Gastrocnemius medialis (tissue), 4 donors: ENCODE measurements at regions of chr11 and their contacts with region 1.

Region 1: GRCh38 chr11:74170694-74171629 is at the starts of genes C2CD3 and PPME1:
- DNase-seq: peak; percentile 97 to 99
- ATAC-seq: peak; percentile 96
- H3K4me3 ChIP-seq: peak within 1 kb of the TSS; percentile 66 to 93 (median 90)
- H3K27ac ChIP-seq: peak within 1 kb of the TSS; percentile 94 to 98 (median 96)
- H3K4me1 ChIP-seq: peaks cover 38 to 50% of the 10 kb centered on the region in 2 donors
- H3K27me3 ChIP-seq: no peaks in the 10 kb centered on the region
- CTCF ChIP-seq: peak in 3 of 5 experiments; percentile 14 to 40 (median 37)
- POLR2A ChIP-seq: peak; percentile 87 to 88
- total RNA-seq, gene C2CD3: 13.8 to 33.2 (median 16.4) TPM
- total RNA-seq, gene PPME1: 31.5 to 51.7 (median 43.2) TPM

Region 2: DNA sequence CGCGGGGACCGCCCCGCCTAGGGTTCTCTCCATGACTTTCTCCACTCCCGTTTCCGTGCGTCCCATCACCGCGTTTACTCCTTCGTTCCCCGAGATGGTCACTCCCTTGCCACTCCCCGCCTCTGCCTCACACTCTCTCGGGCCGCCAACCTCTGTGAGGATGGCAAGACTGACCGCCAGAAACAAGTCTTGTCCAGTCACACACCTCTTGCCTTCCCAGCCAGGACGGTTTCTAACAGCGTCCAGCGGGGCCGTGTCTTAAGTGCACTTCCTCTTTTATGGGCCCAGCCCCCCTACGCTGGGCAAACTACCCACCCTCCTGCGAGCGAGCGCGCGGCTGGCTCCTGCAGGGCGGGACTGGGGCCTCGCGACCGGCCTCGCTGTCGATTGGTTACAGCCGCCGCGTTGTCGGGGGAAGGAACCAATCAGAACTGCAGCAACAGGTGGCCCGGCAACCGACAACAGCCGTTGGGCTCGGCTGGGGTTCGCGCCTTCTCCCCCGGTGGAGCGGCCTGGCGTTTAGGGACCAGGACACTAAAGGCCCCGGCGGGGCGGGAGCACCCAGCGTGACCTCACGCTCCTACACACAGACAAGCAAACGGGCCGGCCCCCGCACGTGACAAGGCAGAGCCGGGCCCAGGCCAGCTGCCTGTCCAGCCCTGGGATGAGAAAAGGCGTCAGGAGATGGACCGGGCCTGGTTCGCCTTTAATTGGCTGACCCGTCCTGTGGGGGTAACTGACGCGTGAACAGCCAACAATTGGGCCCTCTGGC is 187.8 kb before region 1 on chr11:
- in situ Hi-C with region 1: no loop called
- intact Hi-C with region 1: loop called (anchors 5 kb)
- DNase-seq: peak; percentile 93 to 95
- ATAC-seq: peak; percentile 84 to 86
- H3K4me3 ChIP-seq: peak overlapping the region; percentile 66 to 88 (median 75)
- H3K27ac ChIP-seq: peak overlapping the region; percentile 93 to 99 (median 95)
- H3K4me1 ChIP-seq: peaks cover 12 to 36% of the 10 kb centered on the region in 2 donors
- H3K27me3 ChIP-seq: no peaks in the 10 kb centered on the region
- CTCF ChIP-seq: no peak
- POLR2A ChIP-seq: peak; percentile 74 to 92

Region 3: GRCh38 chr11:74138572-74138971 is 32.4 kb before region 1 on chr11:
- in situ Hi-C with region 1: no loop called
- intact Hi-C with region 1: loop called (anchors 1 kb)
- DNase-seq: peak; percentile 39 to 50
- ATAC-seq: peak; percentile 98 to 100
- H3K4me3 ChIP-seq: peak overlapping the region in 1 of 4 donors; percentile 1
- H3K27ac ChIP-seq: peak overlapping the region; percentile 78 to 86 (median 84)
- H3K4me1 ChIP-seq: peaks cover 31 to 48% of the 10 kb centered on the region in 2 donors
- H3K27me3 ChIP-seq: no peaks in the 10 kb centered on the region
- CTCF ChIP-seq: no peak
- POLR2A ChIP-seq: no peak